ENCODE measurements at regions of chr17 and their contacts with region 1.

Region 1: GRCh38 chr17:8125157-8125946 is 1.4 kb upstream of the HES7 start:
- DNase-seq: peak; percentile 82 to 88 (median 84)
- ATAC-seq: peak; percentile 56
- H3K4me3 ChIP-seq: peak overlapping the region in 1 of 2 donors; percentile 23
- H3K27ac ChIP-seq: no peak overlapping the region
- H3K4me1 ChIP-seq: peaks cover 67% of the 10 kb centered on the region
- H3K27me3 ChIP-seq: peaks cover 0 to 29% of the 10 kb centered on the region in 2 donors
- CTCF ChIP-seq: no peak
- POLR2A ChIP-seq: no peak

Region 2: GRCh38 chr17:7060165-7060891 is 1065.0 kb before region 1 on chr17:
- intact Hi-C with region 1: no loop called
- DNase-seq: no peak
- ATAC-seq: no peak
- H3K4me3 ChIP-seq: no peak overlapping the region
- H3K27ac ChIP-seq: no peak overlapping the region
- H3K4me1 ChIP-seq: no peaks in the 10 kb centered on the region
- H3K27me3 ChIP-seq: no peaks in the 10 kb centered on the region
- CTCF ChIP-seq: no peak
- POLR2A ChIP-seq: no peak

Region 3: GRCh38 chr17:8029135-8029534 is 96.2 kb before region 1 on chr17:
- intact Hi-C with region 1: no loop called
- DNase-seq: no peak
- ATAC-seq: no peak
- H3K4me3 ChIP-seq: no peak overlapping the region
- H3K27ac ChIP-seq: no peak overlapping the region
- H3K4me1 ChIP-seq: no peaks in the 10 kb centered on the region
- H3K27me3 ChIP-seq: no peaks in the 10 kb centered on the region
- CTCF ChIP-seq: no peak
- POLR2A ChIP-seq: no peak

Region 4: GRCh38 chr17:8176197-8176940 is 51.0 kb after region 1 on chr17 and contains the start of gene TMEM107:
- intact Hi-C with region 1: loop called (anchors 5 kb)
- DNase-seq: peak; percentile 86 to 90 (median 90)
- ATAC-seq: peak; percentile 74
- H3K4me3 ChIP-seq: peak within 1 kb of the TSS in 1 of 2 donors; percentile 16
- H3K27ac ChIP-seq: peak within 1 kb of the TSS; percentile 56 to 79 (median 78)
- H3K4me1 ChIP-seq: peaks cover 40% of the 10 kb centered on the region
- H3K27me3 ChIP-seq: no peaks in the 10 kb centered on the region
- CTCF ChIP-seq: peak in 1 of 7 experiments; percentile 5
- POLR2A ChIP-seq: peak in 2 of 3 donors; percentile 54 to 63
- total RNA-seq, gene TMEM107: 7.6 to 12.7 TPM

Measured in body of pancreas (tissue), 4 donors.